Sigmoid colon (tissue), 7 donors: ENCODE measurements at regions of chrX and their contacts with region 1.

Region 1: GRCh38 chrX:18390941-18391538 is 34.4 kb upstream of the CDKL5 start:
- DNase-seq: peak; percentile 79
- H3K4me3 ChIP-seq: no peak overlapping the region
- H3K27ac ChIP-seq: no peak overlapping the region
- H3K4me1 ChIP-seq: no peaks in the 10 kb centered on the region
- H3K27me3 ChIP-seq: no peaks in the 10 kb centered on the region
- CTCF ChIP-seq: peak; percentile 36 to 48 (median 44)
- EP300 ChIP-seq: no peak
- POLR2A ChIP-seq: no peak

Region 2: GRCh38 chrX:18896680-18897544 is 505.9 kb after region 1 on chrX:
- intact Hi-C with region 1: loop called (anchors 2 kb)
- DNase-seq: no peak
- H3K4me3 ChIP-seq: no peak overlapping the region
- H3K27ac ChIP-seq: peak overlapping the region in 1 of 4 donors; percentile 69
- H3K4me1 ChIP-seq: peaks cover 0 to 14% (median 9%) of the 10 kb centered on the region in 4 donors
- H3K27me3 ChIP-seq: no peaks in the 10 kb centered on the region
- CTCF ChIP-seq: no peak
- EP300 ChIP-seq: no peak
- POLR2A ChIP-seq: no peak

Region 3: DNA sequence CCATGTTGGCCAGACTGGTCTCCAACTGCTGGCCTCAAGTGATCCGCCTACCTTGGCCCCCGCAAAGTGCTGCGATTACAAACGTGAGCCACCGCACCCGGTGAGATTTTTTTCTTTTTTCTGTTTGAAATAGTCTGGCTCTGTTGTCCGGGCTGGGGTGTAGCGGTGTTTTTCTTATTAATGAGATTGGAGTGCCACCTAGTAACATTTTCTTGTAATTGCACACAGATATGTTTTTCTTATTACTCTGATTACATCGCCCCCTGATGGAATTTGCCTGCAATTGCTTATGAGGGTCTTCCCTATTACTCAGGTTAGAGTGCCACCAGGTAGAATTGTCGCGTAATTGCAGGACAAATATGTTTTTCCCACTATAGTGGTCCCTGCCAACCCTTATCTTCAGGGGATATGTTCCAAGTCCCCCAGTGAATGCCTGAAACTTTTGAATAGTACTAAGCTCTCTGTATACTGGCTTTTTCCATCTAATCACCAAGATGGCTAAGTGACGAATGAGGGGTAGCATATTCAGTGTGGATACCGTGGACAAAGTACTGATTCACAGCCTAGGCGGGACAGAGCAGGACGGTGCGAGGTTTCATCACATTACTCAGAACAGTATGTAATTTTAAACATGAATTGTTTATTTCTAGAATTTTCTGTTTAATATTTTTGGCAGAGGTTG is 944.0 kb after region 1 on chrX:
- intact Hi-C with region 1: loop called (anchors 5 kb)
- DNase-seq: no peak
- H3K4me3 ChIP-seq: no peak overlapping the region
- H3K27ac ChIP-seq: no peak overlapping the region
- H3K4me1 ChIP-seq: no peaks in the 10 kb centered on the region
- H3K27me3 ChIP-seq: no peaks in the 10 kb centered on the region
- CTCF ChIP-seq: no peak
- EP300 ChIP-seq: no peak
- POLR2A ChIP-seq: no peak